Activated T-helper 1 cell treated with anti-CD3 and anti-CD28 coated beads, Interleukin-12 subunit alpha, Interleukin-12 subunit beta, Interleukin-2, Interleukin-4 antibody, amounts not matched to agents 30 ng/mL and 10 ng/mL and 1 ng/mL, durations not matched to agents 14 hours and 24 hours and 36 hours (primary cell): ENCODE measurements at regions of chr2 and their contacts with region 1.

Region 1: DNA sequence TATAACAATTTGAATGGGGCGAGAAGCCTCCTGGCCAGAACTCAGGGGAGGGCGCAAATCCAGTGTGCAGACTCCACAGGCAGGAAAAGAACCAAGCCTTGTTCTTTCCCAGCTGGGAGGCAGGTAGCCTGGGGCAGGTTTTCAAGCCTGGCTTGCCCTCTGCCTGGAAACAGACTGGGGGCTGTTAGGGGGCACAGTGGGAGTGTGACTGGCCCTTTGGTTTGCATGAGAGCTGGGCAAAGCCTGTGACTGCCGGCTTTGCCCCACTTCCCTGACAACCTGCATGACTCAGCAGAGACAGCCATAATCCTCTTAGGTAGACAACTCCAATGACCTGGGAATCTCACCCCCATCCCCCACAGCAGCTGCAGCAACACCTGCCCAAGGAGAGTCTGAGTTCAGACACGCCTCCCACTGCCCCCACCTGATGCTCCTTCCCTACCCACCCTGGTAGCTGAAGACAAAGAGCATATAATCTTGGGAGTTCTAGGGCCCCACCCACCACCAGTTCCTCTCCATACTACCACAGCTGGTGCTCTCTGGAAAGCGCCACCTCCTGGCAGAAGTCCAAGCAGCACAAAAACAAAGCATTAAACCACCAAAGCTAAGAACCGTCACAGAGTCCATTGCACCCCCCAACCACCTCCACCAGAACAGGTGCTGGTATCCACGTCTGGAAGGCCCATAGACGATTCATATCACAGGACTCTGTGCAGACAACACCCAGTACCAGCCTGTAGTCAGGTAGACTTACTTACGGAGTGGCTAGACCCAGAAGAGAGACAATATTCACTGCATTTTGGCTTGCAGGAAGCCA is 402.5 kb downstream of the STK39 start:
- DNase-seq: no peak
- H3K4me3 Mint-ChIP-seq: no peak overlapping the region
- H3K27ac Mint-ChIP-seq: no peak overlapping the region
- H3K4me1 Mint-ChIP-seq: peaks cover 15% of the 10 kb centered on the region
- H3K27me3 Mint-ChIP-seq: peaks cover under 1% of the 10 kb centered on the region

Region 2: DNA sequence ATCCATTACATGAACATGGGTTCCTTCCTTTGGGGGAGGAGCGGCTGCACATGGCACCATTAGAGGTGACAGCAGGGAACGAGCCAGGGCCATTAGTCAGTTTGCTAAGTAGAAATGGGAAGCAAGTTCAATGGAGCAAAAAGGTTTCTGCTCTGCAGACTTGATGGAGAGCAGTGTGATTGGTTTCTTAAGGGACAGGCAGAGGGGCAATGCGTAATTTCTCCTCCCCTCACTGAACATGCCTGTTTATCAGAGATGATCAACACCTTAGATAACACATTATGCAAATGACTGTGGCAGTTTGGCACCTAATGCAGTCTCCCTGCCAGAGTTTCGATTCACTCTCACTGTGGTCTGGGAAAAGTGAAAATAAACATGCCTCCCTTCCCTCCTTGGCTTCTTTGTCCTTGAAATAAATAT is 12.0 kb before region 1 on chr2:
- intact Hi-C with region 1: loop called (anchors 1 kb)
- DNase-seq: no peak
- H3K4me3 Mint-ChIP-seq: no peak overlapping the region
- H3K27ac Mint-ChIP-seq: no peak overlapping the region
- H3K4me1 Mint-ChIP-seq: no peaks in the 10 kb centered on the region
- H3K27me3 Mint-ChIP-seq: peaks cover 7% of the 10 kb centered on the region

Region 3: GRCh38 chr2:167862787-167863186 is 17.9 kb after region 1 on chr2:
- intact Hi-C with region 1: loop called (anchors 1 kb)
- DNase-seq: peak; percentile 2
- H3K4me3 Mint-ChIP-seq: no peak overlapping the region
- H3K27ac Mint-ChIP-seq: no peak overlapping the region
- H3K4me1 Mint-ChIP-seq: peaks cover 20% of the 10 kb centered on the region
- H3K27me3 Mint-ChIP-seq: peaks cover 6% of the 10 kb centered on the region

Region 4: DNA sequence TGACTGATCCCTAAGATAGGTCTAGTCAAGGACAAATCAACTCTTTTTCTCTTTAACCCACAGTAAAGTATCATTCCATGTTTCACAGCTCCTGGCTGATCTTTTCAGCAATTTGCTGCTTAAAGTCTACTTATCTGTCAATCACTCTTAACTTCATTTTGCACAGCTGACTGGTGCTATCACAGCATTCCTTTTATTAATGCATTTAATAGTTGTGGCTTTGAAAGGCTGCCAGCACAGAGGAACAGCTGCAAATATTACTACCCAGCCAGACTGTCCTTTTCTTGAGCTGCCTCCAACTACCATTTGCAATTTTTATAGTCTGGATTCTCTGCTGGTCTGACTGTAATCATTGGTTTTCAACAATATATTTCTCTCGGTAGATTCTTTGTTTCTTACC is 99.0 kb after region 1 on chr2:
- intact Hi-C with region 1: no loop called
- DNase-seq: no peak
- H3K4me3 Mint-ChIP-seq: no peak overlapping the region
- H3K27ac Mint-ChIP-seq: no peak overlapping the region
- H3K4me1 Mint-ChIP-seq: no peaks in the 10 kb centered on the region
- H3K27me3 Mint-ChIP-seq: no peaks in the 10 kb centered on the region